Head of caudate nucleus (tissue), 42 donors: ENCODE measurements at regions of chr6 and their contacts with region 1.

Region 1: GRCh38 chr6:148166339-148166968 is 176.2 kb upstream of the SASH1 start:
- DNase-seq: peak in 6 of 42 donors; percentile 5 to 40 (median 12)

Region 2: DNA sequence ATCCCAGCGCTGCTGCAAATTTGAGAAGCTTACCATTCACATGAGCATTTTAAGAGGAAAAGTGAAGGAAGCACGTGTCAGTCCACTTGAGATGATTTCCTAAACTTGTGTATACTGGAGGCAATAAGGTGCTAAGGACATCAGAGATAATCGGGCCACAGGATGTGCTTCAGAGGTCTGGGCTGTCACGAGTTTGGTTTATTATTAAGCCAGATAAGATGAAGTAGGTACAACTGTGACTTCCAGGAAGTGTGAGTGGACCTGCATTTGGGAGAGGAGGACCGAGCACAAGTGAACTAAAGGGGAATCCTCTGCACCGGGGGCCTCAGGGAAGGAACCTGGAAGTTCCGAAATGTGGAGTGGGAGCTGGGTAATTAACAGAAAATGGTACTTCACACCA is 656.6 kb before region 1 on chr6:
- intact Hi-C with region 1: loop called (anchors 5 kb)
- DNase-seq: no peak